CD8-positive, alpha-beta T cell (primary cell): ENCODE measurements at regions of chr17 and their contacts with region 1.

Region 1: DNA sequence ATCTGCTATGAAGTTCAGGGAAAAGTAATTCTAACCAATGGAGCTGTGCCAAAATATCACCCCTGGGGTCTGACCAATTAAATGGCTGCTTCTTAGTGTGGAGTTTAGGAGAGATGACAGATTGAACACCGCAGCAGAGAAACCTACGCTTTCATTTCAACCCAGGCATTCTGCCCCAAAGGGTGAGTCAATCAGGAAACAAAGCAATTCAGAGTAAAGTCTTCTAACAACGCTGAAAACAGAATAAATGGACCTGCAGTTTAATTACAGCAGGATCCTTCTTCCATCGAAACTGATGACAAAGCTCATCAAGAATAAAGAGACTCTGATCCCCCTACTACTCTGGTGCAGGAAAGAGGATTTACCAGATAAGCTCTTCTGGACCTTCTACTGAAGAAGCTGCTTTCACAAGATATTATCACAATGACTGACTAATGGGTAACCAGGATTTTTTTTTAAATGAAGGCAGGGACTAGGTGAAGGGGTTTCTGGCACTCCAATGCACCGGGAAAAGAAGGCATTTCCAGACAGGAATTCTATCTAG is 16.7 kb downstream of the RFFL start:
- DNase-seq: peak; percentile 21 to 89 (median 64)
- ATAC-seq: peak; percentile 74
- H3K4me3 ChIP-seq: peak overlapping the region; percentile 31 to 33
- H3K4me3 Mint-ChIP-seq: peak overlapping the region; percentile 75
- H3K27ac ChIP-seq: peak overlapping the region; percentile 39 to 71
- H3K27ac Mint-ChIP-seq: peak overlapping the region; percentile 97
- H3K4me1 ChIP-seq: peaks cover 79% of the 10 kb centered on the region
- H3K4me1 Mint-ChIP-seq: peaks cover 76% of the 10 kb centered on the region
- H3K27me3 ChIP-seq: no peaks in the 10 kb centered on the region
- H3K27me3 Mint-ChIP-seq: no peaks in the 10 kb centered on the region
- CTCF ChIP-seq: no peak

Region 2: GRCh38 chr17:34398990-34399389 is 647.8 kb before region 1 on chr17:
- CTCF ChIA-PET with region 1: no interaction called
- POLR2A ChIA-PET with region 1: no interaction called
- intact Hi-C with region 1: no loop called
- DNase-seq: peak in 1 of 9 experiments; percentile 18
- ATAC-seq: no peak
- H3K4me3 ChIP-seq: no peak overlapping the region
- H3K4me3 Mint-ChIP-seq: no peak overlapping the region
- H3K27ac ChIP-seq: no peak overlapping the region
- H3K27ac Mint-ChIP-seq: no peak overlapping the region
- H3K4me1 ChIP-seq: no peaks in the 10 kb centered on the region
- H3K4me1 Mint-ChIP-seq: no peaks in the 10 kb centered on the region
- H3K27me3 ChIP-seq: no peaks in the 10 kb centered on the region
- H3K27me3 Mint-ChIP-seq: peaks cover 11% of the 10 kb centered on the region
- CTCF ChIP-seq: no peak

Region 3: GRCh38 chr17:34961093-34961911 is 85.5 kb before region 1 on chr17 and contains the starts of genes CCT6B and ZNF830:
- CTCF ChIA-PET with region 1: no interaction called
- POLR2A ChIA-PET with region 1: no interaction called
- intact Hi-C with region 1: no loop called
- DNase-seq: peak; percentile 75 to 97 (median 92)
- ATAC-seq: peak; percentile 88
- H3K4me3 ChIP-seq: peak within 1 kb of the TSS; percentile 72 to 78
- H3K4me3 Mint-ChIP-seq: peak within 1 kb of the TSS; percentile 100
- H3K27ac ChIP-seq: peak within 1 kb of the TSS; percentile 84 to 99
- H3K27ac Mint-ChIP-seq: peak within 1 kb of the TSS; percentile 99
- H3K4me1 ChIP-seq: peaks cover 22% of the 10 kb centered on the region
- H3K4me1 Mint-ChIP-seq: peaks cover 40% of the 10 kb centered on the region
- H3K27me3 ChIP-seq: no peaks in the 10 kb centered on the region
- H3K27me3 Mint-ChIP-seq: peaks cover 6% of the 10 kb centered on the region
- CTCF ChIP-seq: no peak
- total RNA-seq, gene CCT6B: 4.0 to 5.9 TPM
- total RNA-seq, gene ZNF830: 43.6 to 45.0 TPM

Region 4: GRCh38 chr17:35022536-35023063 is 24.2 kb before region 1 on chr17:
- CTCF ChIA-PET with region 1: interaction called, 7 read pairs
- POLR2A ChIA-PET with region 1: interaction called, 10 read pairs
- intact Hi-C with region 1: loop called in 1 of 2 experiments (anchors 1 kb)
- DNase-seq: peak; percentile 43 to 88 (median 79)
- ATAC-seq: peak; percentile 96
- H3K4me3 ChIP-seq: no peak overlapping the region
- H3K4me3 Mint-ChIP-seq: peak overlapping the region; percentile 57
- H3K27ac ChIP-seq: peak overlapping the region; percentile 49 to 88
- H3K27ac Mint-ChIP-seq: peak overlapping the region; percentile 98
- H3K4me1 ChIP-seq: peaks cover 31% of the 10 kb centered on the region
- H3K4me1 Mint-ChIP-seq: peaks cover 58% of the 10 kb centered on the region
- H3K27me3 ChIP-seq: no peaks in the 10 kb centered on the region
- H3K27me3 Mint-ChIP-seq: no peaks in the 10 kb centered on the region
- CTCF ChIP-seq: no peak

Region 5: GRCh38 chr17:35630530-35631148 is 583.8 kb after region 1 on chr17:
- CTCF ChIA-PET with region 1: no interaction called
- POLR2A ChIA-PET with region 1: no interaction called
- intact Hi-C with region 1: no loop called
- DNase-seq: no peak
- ATAC-seq: no peak
- H3K4me3 ChIP-seq: no peak overlapping the region
- H3K4me3 Mint-ChIP-seq: no peak overlapping the region
- H3K27ac ChIP-seq: no peak overlapping the region
- H3K27ac Mint-ChIP-seq: no peak overlapping the region
- H3K4me1 ChIP-seq: no peaks in the 10 kb centered on the region
- H3K4me1 Mint-ChIP-seq: no peaks in the 10 kb centered on the region
- H3K27me3 ChIP-seq: no peaks in the 10 kb centered on the region
- H3K27me3 Mint-ChIP-seq: no peaks in the 10 kb centered on the region
- CTCF ChIP-seq: no peak